Sciatic nerve (tissue), 2 donors: ENCODE measurements at regions of chrX and their contacts with region 1.

Region 1: DNA sequence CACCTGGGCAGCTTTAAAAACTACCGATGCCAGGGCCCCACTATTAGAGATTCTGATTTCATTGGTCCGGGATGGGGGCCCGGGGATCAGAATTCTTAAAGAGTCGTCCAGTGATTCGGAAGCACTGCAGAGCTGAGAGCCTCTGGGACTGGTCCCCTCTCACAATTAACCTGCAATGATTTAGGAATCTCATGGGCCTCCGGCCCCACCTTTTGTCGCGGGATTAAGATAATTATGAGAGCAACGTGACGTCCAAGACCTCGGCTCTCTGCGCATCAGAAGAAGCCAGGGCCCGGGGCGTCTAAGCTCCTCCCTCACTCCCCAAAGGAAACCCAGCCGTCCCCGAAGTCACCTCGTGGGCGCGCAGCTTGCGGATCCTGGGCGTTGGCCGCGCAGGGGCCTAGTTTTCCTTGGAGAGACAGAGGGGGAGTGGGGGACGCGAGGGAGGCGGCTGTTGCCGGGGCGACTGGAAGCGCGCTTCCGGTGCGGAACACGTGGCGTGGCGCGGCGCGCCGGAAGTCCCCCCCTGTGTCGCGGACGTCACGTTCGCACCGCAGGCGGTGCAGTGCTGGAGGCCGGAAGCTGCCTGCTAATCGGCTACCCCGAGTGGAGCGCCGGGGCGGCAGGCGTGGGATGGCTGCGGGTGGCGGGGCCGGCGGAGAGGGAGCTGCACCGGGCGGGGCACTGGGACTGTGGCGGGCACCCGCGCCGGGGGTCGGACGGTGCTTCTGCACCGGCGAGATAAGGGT is at the start of gene GEMIN8:
- DNase-seq: peak; percentile 95
- ATAC-seq: peak; percentile 98
- total RNA-seq, gene GEMIN8: 33.6 TPM

Region 2: DNA sequence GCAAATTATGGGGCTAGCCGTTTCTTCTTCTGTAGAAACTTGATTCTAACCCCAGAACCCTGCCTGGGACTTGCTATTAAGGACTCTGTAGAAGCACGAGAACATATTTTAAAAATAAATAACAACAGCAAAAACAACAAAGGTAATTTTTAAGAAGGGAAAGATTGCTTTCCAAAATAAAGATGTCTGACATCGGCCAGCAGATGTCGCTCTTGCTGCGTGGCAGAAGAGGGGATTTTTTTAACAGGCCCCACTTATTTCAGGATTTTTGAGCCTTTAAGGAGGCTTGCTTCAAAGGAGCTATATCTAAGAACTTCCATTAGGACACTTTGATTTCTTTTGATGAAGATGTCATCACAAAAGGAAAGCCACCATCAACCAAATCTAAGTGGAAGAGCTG is 523.0 kb before region 1 on chrX:
- intact Hi-C with region 1: loop called (anchors 5 kb)
- DNase-seq: peak; percentile 73
- ATAC-seq: no peak

Region 3: GRCh38 chrX:13662355-13662791 is 367.2 kb before region 1 on chrX:
- intact Hi-C with region 1: loop called (anchors 5 kb)
- DNase-seq: no peak
- ATAC-seq: peak; percentile 84

Region 4: DNA sequence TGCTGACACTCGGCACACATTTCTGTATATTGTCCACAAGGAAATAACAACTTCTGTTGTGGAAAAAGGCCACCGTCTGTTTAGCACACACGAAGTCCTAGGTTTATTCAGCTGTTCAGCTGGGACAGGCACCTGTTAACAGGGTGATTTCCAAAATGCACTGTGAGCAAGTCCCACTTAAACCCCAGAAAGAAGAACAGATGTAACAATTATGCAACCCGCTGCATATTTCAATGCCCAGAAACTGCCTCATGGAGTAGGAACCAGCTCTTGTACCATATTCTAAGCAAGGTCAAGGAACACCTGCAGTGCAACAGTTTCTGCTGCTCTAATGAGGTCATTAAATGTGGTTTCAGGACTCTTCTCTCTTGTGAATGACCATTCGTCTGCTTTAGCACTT is 77.0 kb before region 1 on chrX:
- intact Hi-C with region 1: no loop called
- DNase-seq: no peak
- ATAC-seq: no peak